ENCODE measurements at regions of chr4 and their contacts with region 1.

Region 1: GRCh38 chr4:87848622-87849351 is 16.0 kb downstream of the MEPE start:
- DNase-seq: no peak
- H3K4me3 ChIP-seq: peak overlapping the region in 1 of 4 experiments; percentile 46; a peak in 2 of 8 replicates
- H3K27ac ChIP-seq: no peak overlapping the region
- H3K4me1 ChIP-seq: peaks cover 0 to 12% (median 6%) of the 10 kb centered on the region in 4 experiments; a peak in 6 of 7 replicates
- H3K27me3 ChIP-seq: no peaks in the 10 kb centered on the region
- CTCF ChIP-seq: peak; percentile 38 to 69 (median 67)
- EP300 ChIP-seq: no peak
- POLR2A ChIP-seq: no peak
- RAD21 ChIP-seq: peak; percentile 77 to 82

Region 2: DNA sequence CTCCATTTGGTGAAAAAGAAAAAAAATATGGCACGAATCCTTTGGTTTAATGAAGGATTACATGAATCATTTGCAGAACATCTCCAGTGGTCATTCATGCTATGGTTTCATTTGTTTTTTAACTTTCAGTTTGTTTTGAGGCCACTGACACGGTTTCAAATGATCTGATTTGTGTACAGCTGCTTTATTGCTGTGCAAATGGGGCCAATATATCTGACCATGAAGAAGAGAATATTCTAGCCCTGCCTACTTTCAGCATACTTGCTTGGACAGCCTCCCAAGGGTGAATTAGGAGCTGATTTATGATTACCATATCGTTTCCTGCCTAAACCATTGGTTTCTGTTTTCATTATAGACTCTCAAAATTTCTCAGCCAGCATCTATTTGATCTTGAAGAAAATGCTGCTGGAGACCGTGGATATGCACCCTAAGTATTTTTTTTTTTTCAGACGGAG is 350.3 kb before region 1 on chr4:
- CTCF ChIA-PET with region 1: interaction called, 13 read pairs
- POLR2A ChIA-PET with region 1: no interaction called
- DNase-seq: no peak
- H3K4me3 ChIP-seq: no peak overlapping the region
- H3K27ac ChIP-seq: no peak overlapping the region
- H3K4me1 ChIP-seq: no peaks in the 10 kb centered on the region
- H3K27me3 ChIP-seq: no peaks in the 10 kb centered on the region
- CTCF ChIP-seq: no peak
- EP300 ChIP-seq: no peak
- POLR2A ChIP-seq: no peak
- RAD21 ChIP-seq: no peak

Region 3: DNA sequence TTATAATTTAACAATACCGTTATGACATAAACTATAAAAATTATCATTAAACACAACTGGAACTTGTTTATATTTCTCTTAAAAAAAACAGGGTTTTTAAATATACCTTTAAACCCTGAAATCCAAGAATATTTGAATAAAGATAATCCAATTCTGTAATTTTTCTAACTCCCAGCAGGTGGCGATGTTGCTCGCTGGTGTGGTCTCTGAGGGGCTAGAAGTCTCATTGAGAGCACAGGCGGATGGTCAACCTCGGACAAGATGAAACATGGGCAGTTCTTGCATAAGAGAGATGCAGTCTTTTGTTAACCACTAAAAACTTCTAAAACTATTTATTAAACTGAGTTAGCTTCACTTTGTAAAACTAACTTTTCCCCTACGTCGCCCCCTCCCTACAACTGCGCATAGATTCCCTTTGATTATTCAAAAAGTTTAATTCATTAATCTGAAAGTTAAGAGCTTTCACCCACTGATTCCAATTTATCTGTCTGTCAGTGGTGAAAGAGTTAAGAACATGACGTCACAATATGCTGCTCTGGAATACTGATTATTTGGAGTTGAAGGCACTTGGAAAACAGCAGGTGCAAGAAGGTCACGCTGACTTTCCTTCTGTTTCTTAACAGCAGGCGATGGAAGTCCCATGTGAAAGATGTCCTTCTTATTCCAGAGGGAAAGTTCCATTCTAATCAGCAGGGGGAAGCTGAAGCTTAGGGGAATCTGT is 169.2 kb before region 1 on chr4:
- CTCF ChIA-PET with region 1: interaction called, 43 read pairs
- POLR2A ChIA-PET with region 1: interaction called, 4 read pairs
- DNase-seq: peak; percentile 47 to 68
- H3K4me3 ChIP-seq: peak overlapping the region in 1 of 4 experiments; percentile 44; a peak in 1 of 8 replicates
- H3K27ac ChIP-seq: peak overlapping the region; percentile 66; the same call in 1 of the 2 replicates
- H3K4me1 ChIP-seq: peaks cover 0 to 11% (median 9%) of the 10 kb centered on the region in 4 experiments; a peak in 4 of 7 replicates
- H3K27me3 ChIP-seq: no peaks in the 10 kb centered on the region
- CTCF ChIP-seq: peak; percentile 38 to 85 (median 58)
- EP300 ChIP-seq: peak in 1 of 2 experiments; percentile 97; a peak in 2 of 3 replicates
- POLR2A ChIP-seq: no peak
- RAD21 ChIP-seq: peak; percentile 93 to 96

Region 4: GRCh38 chr4:87865960-87866598 is 17.3 kb after region 1 on chr4:
- CTCF ChIA-PET with region 1: interaction called, 25 read pairs
- POLR2A ChIA-PET with region 1: interaction called, 9 read pairs
- DNase-seq: peak in 1 of 2 experiments; percentile 47
- H3K4me3 ChIP-seq: peak overlapping the region in 3 of 4 experiments; percentile 15 to 55 (median 15); a peak in 3 of 8 replicates
- H3K27ac ChIP-seq: peak overlapping the region; percentile 59; the same call in 1 of the 2 replicates
- H3K4me1 ChIP-seq: peaks cover 0 to 14% (median 7%) of the 10 kb centered on the region in 4 experiments; a peak in 3 of 7 replicates
- H3K27me3 ChIP-seq: no peaks in the 10 kb centered on the region
- CTCF ChIP-seq: no peak
- EP300 ChIP-seq: no peak; a peak in 1 of 3 replicates
- POLR2A ChIP-seq: peak; percentile 45 to 60; a peak in 2 of 3 replicates
- RAD21 ChIP-seq: no peak

Region 5: DNA sequence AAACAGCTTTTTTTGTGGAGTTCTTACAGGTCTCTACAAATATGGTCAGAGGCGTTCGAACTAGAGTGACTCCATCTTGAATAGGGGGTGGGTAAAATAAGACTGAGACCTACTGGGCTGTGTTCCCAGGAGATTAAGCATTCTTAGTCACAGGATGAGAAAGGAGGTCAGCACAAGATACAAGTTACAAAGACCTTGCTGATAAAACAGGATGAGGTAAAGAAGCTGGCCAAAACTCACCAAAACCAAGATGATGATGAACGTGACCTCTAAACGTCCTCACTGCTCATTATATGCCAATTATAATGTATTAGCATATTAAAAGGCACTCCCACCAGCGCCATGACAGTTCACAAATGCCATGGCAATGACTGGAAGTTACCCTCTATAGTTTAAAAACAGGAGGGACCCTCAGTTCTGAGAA is 83.9 kb after region 1 on chr4:
- CTCF ChIA-PET with region 1: interaction called, 7 read pairs
- POLR2A ChIA-PET with region 1: interaction called, 369 read pairs
- DNase-seq: no peak
- H3K4me3 ChIP-seq: no peak overlapping the region
- H3K27ac ChIP-seq: no peak overlapping the region
- H3K4me1 ChIP-seq: peaks cover 0 to 6% (median 0%) of the 10 kb centered on the region in 4 experiments; a peak in 2 of 7 replicates
- H3K27me3 ChIP-seq: no peaks in the 10 kb centered on the region
- CTCF ChIP-seq: no peak
- EP300 ChIP-seq: no peak
- POLR2A ChIP-seq: peak; percentile 62 to 99
- RAD21 ChIP-seq: no peak

Region 6: DNA sequence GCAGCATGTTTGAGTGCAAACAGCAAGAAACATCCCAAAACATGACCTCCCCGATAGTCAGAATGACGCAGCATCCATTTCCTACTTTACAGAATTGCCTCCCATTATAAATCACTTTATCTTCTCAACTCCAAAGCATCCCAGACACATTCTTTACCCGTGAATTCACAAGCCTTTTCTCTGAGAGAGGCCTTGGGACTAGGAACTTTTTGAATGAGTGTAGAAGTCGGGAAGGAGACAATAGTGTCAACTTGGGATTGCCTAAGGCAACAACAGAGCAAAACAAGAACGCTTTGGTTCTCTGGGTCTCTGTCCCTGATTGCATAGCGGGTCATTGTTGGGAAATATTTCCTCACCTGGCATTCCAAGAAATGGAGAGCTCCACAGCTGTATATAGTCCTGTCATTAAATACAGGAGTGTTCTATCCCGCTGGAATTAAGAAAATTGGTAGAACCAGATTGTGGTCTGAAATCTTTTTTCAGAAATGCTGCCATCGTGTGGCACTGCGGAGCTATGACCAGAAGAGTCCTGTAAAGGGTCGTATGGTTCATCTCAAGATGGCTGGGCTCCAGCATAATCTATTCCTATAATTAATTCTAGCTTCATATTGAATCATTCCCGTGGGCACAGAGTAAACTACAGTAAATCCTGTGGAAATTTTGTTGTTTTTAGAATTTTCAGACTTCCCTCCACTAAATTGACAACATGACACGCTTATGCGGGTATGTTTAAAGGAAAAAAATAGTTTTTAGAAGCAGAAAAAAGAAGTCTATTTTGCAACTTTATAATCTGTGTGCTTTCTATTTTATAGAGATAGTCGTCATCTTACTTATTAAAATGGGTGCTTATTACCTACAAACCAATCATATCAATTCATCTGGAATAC is 124.7 kb after region 1 on chr4:
- CTCF ChIA-PET with region 1: interaction called, 28 read pairs
- POLR2A ChIA-PET with region 1: interaction called, 8 read pairs
- DNase-seq: peak; percentile 38 to 75
- H3K4me3 ChIP-seq: peak overlapping the region in 3 of 4 experiments; percentile 11 to 43 (median 21); a peak in 6 of 8 replicates
- H3K27ac ChIP-seq: no peak overlapping the region
- H3K4me1 ChIP-seq: peaks cover 2 to 11% (median 6%) of the 10 kb centered on the region in 4 experiments; a peak in 5 of 7 replicates
- H3K27me3 ChIP-seq: no peaks in the 10 kb centered on the region
- CTCF ChIP-seq: peak; percentile 36 to 79 (median 63)
- EP300 ChIP-seq: no peak
- POLR2A ChIP-seq: no peak
- RAD21 ChIP-seq: peak; percentile 69 to 77